ENCODE measurements at regions of chr10 and their contacts with region 1.

Region 1: DNA sequence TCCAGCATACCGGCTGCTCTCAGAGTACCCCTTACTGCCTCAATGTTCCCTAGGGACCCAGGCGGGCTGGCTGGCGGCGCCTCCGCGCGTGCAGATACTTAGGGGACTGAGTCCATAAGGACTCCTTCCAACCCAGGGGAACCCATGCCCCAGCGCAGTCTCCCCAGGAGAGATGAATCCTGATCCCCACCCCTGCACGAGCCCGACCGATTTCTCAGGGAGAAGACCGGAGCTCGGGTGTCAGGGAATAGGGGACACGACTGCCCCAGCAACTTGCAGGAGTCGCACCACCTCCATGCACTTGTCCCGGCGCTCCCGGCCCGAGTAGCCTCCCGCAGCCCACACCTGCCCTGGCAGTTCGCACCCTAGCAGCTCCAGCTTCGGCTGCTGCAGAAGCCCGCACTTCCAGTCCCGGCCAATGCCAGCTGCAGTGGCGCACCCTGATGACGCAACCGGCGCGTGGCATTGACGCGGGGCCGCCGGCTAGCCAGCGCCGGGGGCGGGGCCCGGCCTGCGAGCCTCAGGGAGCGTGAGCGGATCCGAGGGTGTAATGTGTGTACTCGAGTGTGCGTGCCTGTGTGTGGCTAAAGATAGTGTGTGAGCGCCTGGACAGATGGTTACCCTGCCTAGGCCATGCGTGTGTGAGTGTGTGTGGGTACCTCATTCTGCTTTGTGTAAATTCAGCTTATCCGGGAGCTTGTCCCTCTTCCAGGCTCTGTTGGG is at the start of gene GPAM:
- DNase-seq: peak; percentile 95 to 99
- H3K4me3 ChIP-seq: peak within 1 kb of the TSS; percentile 93
- H3K4me3 Mint-ChIP-seq: peak within 1 kb of the TSS; percentile 85
- H3K27ac Mint-ChIP-seq: peak within 1 kb of the TSS; percentile 92
- H3K4me1 ChIP-seq: peaks cover 35% of the 10 kb centered on the region
- H3K4me1 Mint-ChIP-seq: peaks cover 21% of the 10 kb centered on the region
- H3K27me3 ChIP-seq: no peaks in the 10 kb centered on the region
- H3K27me3 Mint-ChIP-seq: no peaks in the 10 kb centered on the region
- CTCF ChIP-seq: no peak
- total RNA-seq, gene GPAM: 40.2 and 44.4 TPM in 2 replicates

Region 2: GRCh38 chr10:112131346-112131745 is 52.1 kb before region 1 on chr10:
- CTCF ChIA-PET with region 1: no interaction called
- POLR2A ChIA-PET with region 1: no interaction called
- intact Hi-C with region 1: no loop called
- DNase-seq: no peak
- H3K4me3 ChIP-seq: no peak overlapping the region
- H3K4me3 Mint-ChIP-seq: no peak overlapping the region
- H3K27ac Mint-ChIP-seq: no peak overlapping the region
- H3K4me1 ChIP-seq: no peaks in the 10 kb centered on the region
- H3K4me1 Mint-ChIP-seq: no peaks in the 10 kb centered on the region
- H3K27me3 ChIP-seq: no peaks in the 10 kb centered on the region
- H3K27me3 Mint-ChIP-seq: peaks cover 3% of the 10 kb centered on the region
- CTCF ChIP-seq: no peak

Region 3: GRCh38 chr10:112280205-112280921 is 96.9 kb after region 1 on chr10:
- CTCF ChIA-PET with region 1: no interaction called
- POLR2A ChIA-PET with region 1: no interaction called
- intact Hi-C with region 1: loop called (anchors 1 kb)
- DNase-seq: peak; percentile 52 to 73
- H3K4me3 ChIP-seq: no peak overlapping the region
- H3K4me3 Mint-ChIP-seq: no peak overlapping the region
- H3K27ac Mint-ChIP-seq: peak overlapping the region; percentile 55
- H3K4me1 ChIP-seq: peaks cover 52% of the 10 kb centered on the region
- H3K4me1 Mint-ChIP-seq: peaks cover 27% of the 10 kb centered on the region
- H3K27me3 ChIP-seq: no peaks in the 10 kb centered on the region
- H3K27me3 Mint-ChIP-seq: no peaks in the 10 kb centered on the region
- CTCF ChIP-seq: no peak

Measured in Caco-2 (cell line).